ENCODE measurements at regions of chr1 and their contacts with region 1.

Region 1: GRCh38 chr1:100132566-100133477 is at the starts of genes SASS6 and TRMT13:
- DNase-seq: peak; percentile 96 to 98 (median 97)
- ATAC-seq: peak; percentile 99
- H3K4me3 ChIP-seq: peak within 1 kb of the TSS; percentile 56 to 88 (median 78)
- H3K27ac ChIP-seq: peak within 1 kb of the TSS in 11 of 12 donors; percentile 46 to 82 (median 66)
- H3K4me1 ChIP-seq: peaks cover 0 to 32% (median 19%) of the 10 kb centered on the region in 12 donors
- H3K27me3 ChIP-seq: no peaks in the 10 kb centered on the region
- CTCF ChIP-seq: peak in 2 of 12 donors; percentile 9 to 13
- POLR2A ChIP-seq: peak in 1 of 2 donors; percentile 30
- total RNA-seq, gene SASS6: 1.5 to 2.2 (median 1.8) TPM
- total RNA-seq, gene TRMT13: 2.0 to 8.1 (median 5.9) TPM

Region 2: GRCh38 chr1:99808391-99809115 is 324.3 kb before region 1 on chr1:
- intact Hi-C with region 1: loop called in 2 of 10 experiments (anchors 5 kb)
- DNase-seq: peak in 2 of 5 donors; percentile 22 to 28
- ATAC-seq: peak; percentile 79 to 96 (median 90)
- H3K4me3 ChIP-seq: peak overlapping the region in 4 of 12 donors; percentile 3 to 18 (median 12)
- H3K27ac ChIP-seq: peak overlapping the region in 3 of 12 donors; percentile 20 to 84 (median 58)
- H3K4me1 ChIP-seq: peaks cover 0 to 10% (median 0%) of the 10 kb centered on the region in 12 donors
- H3K27me3 ChIP-seq: no peaks in the 10 kb centered on the region
- CTCF ChIP-seq: peak; percentile 54 to 75 (median 65)
- POLR2A ChIP-seq: no peak

Region 3: DNA sequence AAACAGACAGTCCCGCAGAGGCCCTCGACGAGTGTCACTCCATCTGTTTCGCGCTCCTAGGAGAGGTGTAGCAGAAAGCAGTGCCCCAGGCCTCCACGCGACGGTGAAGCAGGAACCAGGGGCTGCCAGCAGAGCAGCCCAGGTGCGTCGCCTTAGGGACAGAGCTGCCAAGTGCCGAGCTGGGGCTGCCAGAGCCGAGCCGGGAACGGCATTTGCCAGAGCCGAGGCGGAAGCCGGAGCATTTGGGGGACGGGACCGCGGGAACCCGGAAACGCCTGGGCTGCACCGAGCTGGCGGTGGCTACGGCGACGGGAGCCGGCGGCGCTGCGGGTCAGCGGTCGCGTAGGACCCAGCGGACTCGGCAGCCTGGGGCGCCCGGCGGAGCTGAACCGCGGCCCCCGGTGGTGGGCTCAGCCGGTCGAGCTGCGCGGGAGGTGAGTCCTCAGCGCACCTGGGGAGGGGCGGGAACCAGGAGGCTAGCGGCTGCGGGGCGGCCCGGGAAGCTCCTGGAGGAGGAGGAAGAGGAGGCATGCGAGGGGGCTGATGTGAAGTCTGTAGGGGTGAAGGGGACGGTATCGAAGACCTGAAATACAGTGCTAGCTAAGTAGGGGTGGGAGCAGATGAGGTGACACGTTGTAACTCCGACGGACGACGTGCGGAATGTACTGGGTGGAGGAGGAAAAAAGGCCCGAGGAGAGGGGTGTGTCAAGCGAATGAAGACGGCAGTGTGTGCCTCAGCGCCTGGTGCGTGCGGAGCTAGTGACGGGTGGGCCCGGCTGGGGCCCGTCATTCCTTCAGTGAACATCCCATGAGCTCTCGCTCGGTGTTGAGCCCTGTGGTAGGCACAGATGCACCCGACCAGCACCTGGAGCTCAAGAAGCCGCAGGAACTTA is 162.8 kb before region 1 on chr1 and contains the start of gene SLC35A3:
- intact Hi-C with region 1: loop called in 2 of 10 experiments (anchors 10 kb)
- DNase-seq: peak; percentile 78 to 92 (median 85)
- ATAC-seq: peak; percentile 84 to 99 (median 98)
- H3K4me3 ChIP-seq: peak within 1 kb of the TSS; percentile 49 to 99 (median 93)
- H3K27ac ChIP-seq: peak within 1 kb of the TSS; percentile 49 to 85 (median 73)
- H3K4me1 ChIP-seq: peaks cover 0 to 28% (median 11%) of the 10 kb centered on the region in 12 donors
- H3K27me3 ChIP-seq: no peaks in the 10 kb centered on the region
- CTCF ChIP-seq: peak in 2 of 12 donors; percentile 6 to 16
- POLR2A ChIP-seq: peak in 1 of 2 donors; percentile 52
- total RNA-seq, gene SLC35A3: 5.2 to 10.9 (median 7.1) TPM

Region 4: DNA sequence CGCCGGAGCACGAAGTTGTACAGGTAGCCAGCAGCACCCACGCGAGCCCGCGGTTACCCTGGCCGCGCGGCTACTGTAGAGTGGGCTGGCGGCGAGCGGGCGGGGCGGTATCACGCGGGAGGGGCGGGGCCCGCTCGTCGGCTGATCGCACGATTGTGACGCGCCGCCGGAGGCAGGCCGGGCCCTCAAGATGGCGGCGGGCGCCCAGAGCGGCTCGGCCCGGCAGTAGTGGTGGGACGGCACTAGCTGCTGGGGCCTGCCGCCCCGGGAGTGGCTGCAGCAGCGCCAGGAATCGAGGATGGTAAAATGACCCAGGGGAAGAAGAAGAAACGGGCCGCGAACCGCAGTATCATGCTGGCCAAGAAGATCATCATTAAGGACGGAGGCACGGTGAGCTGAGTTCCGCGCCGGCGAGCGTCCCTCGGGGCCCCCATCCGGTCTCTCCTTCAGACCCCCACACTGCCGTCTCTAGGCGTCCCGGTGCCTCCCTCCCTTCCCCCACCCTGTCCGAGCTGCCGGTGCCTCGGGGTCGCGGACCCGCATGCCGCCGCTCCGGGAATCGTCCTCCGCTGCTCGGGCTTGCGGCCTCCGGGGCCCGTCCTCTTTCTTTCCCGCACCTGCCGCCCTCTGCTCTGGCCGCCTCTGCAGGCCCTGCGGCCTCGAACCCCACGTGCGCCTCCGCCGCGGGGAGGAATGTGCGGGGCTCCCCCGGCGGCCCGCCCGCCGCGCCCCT is 94.7 kb before region 1 on chr1:
- intact Hi-C with region 1: loop called in 3 of 10 experiments (anchors 2 to 10 kb)
- DNase-seq: peak; percentile 91 to 95 (median 93)
- ATAC-seq: peak; percentile 98 to 100 (median 99)
- H3K4me3 ChIP-seq: peak overlapping the region; percentile 79 to 96 (median 89)
- H3K27ac ChIP-seq: peak overlapping the region; percentile 86 to 99 (median 96)
- H3K4me1 ChIP-seq: peaks cover 0 to 47% (median 24%) of the 10 kb centered on the region in 12 donors
- H3K27me3 ChIP-seq: no peaks in the 10 kb centered on the region
- CTCF ChIP-seq: no peak
- POLR2A ChIP-seq: peak; percentile 75 to 90

Region 5: DNA sequence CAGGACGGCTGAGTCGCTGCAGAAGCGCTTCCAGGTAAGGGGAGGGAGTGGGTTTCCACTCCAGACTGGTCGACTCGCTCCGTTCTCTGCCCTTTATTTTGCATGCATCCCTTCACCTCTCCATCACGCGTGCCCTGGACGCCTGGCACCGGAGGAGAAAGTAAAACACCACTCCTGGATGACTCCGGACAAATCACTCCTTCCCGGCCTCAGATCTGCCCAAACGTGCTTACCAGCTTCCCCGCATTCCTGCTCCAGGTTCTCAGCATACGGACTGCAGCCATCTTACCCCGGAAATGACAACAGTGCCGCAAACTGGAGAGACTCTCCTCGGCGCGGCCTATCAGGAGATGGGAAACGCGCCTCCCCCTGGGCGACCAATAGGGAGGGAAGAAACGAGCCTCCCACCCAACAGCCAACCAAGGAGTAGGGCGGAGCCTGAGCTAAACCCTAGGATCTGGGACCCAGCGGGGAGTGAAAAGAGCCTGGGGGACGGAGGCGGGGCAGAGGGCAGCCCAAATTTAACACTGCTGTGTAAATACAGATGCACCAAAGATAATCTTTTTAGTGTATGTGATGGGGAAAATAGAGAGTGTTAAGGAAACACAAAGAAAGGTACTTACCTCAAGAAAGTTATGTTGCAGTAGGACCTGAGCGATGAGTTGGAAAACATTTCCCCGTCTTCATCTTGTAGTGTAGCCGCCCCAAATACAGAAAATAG is 116.9 kb after region 1 on chr1 and contains the start of gene DBT:
- intact Hi-C with region 1: loop called in 2 of 10 experiments (anchors 5 to 10 kb)
- DNase-seq: peak; percentile 94 to 97 (median 95)
- ATAC-seq: peak; percentile 100
- H3K4me3 ChIP-seq: peak within 1 kb of the TSS; percentile 74 to 97 (median 83)
- H3K27ac ChIP-seq: peak within 1 kb of the TSS; percentile 75 to 95 (median 86)
- H3K4me1 ChIP-seq: peaks cover 0 to 30% (median 17%) of the 10 kb centered on the region in 12 donors
- H3K27me3 ChIP-seq: no peaks in the 10 kb centered on the region
- CTCF ChIP-seq: no peak
- POLR2A ChIP-seq: peak; percentile 18 to 88
- total RNA-seq, gene DBT: 15.6 to 45.3 (median 29.8) TPM

Region 6: GRCh38 chr1:100265931-100266740 is 133.3 kb after region 1 on chr1 and contains the start of gene RTCA:
- intact Hi-C with region 1: loop called in 2 of 10 experiments (anchors 1 to 5 kb)
- DNase-seq: peak; percentile 96 to 99 (median 98)
- ATAC-seq: peak; percentile 98 to 100 (median 99)
- H3K4me3 ChIP-seq: peak within 1 kb of the TSS; percentile 62 to 99 (median 82)
- H3K27ac ChIP-seq: peak within 1 kb of the TSS; percentile 39 to 92 (median 82)
- H3K4me1 ChIP-seq: peaks cover 0 to 35% (median 23%) of the 10 kb centered on the region in 12 donors
- H3K27me3 ChIP-seq: no peaks in the 10 kb centered on the region
- CTCF ChIP-seq: peak in 1 of 12 donors; percentile 27
- POLR2A ChIP-seq: peak; percentile 14 to 93
- total RNA-seq, gene RTCA: 31.4 to 54.6 (median 36.3) TPM

Region 7: GRCh38 chr1:100895540-100896483 is 763.0 kb after region 1 on chr1 and contains the start of gene SLC30A7:
- intact Hi-C with region 1: loop called in 3 of 10 experiments (anchors 5 to 10 kb)
- DNase-seq: peak; percentile 95 to 98 (median 96)
- ATAC-seq: peak; percentile 93 to 98 (median 96)
- H3K4me3 ChIP-seq: peak within 1 kb of the TSS; percentile 72 to 94 (median 80)
- H3K27ac ChIP-seq: peak within 1 kb of the TSS; percentile 86 to 98 (median 95)
- H3K4me1 ChIP-seq: peaks cover 0 to 37% (median 21%) of the 10 kb centered on the region in 12 donors
- H3K27me3 ChIP-seq: no peaks in the 10 kb centered on the region
- CTCF ChIP-seq: no peak
- POLR2A ChIP-seq: peak in 1 of 2 donors; percentile 57
- total RNA-seq, gene SLC30A7: 3.9 to 19.4 (median 5.5) TPM

Measured in heart left ventricle (tissue), 16 donors.